ENCODE measurements at regions of chr1 and their contacts with region 1.

Region 1: GRCh38 chr1:19918057-19918456 is 5.4 kb downstream of the PLA2G2E start:
- DNase-seq: peak; percentile 85
- ATAC-seq: peak; percentile 75 to 86

Region 2: GRCh38 chr1:20151906-20152598 is 234.0 kb after region 1 on chr1:
- intact Hi-C with region 1: loop called (anchors 2 kb)
- DNase-seq: peak; percentile 90
- ATAC-seq: peak; percentile 91 to 93

Region 3: DNA sequence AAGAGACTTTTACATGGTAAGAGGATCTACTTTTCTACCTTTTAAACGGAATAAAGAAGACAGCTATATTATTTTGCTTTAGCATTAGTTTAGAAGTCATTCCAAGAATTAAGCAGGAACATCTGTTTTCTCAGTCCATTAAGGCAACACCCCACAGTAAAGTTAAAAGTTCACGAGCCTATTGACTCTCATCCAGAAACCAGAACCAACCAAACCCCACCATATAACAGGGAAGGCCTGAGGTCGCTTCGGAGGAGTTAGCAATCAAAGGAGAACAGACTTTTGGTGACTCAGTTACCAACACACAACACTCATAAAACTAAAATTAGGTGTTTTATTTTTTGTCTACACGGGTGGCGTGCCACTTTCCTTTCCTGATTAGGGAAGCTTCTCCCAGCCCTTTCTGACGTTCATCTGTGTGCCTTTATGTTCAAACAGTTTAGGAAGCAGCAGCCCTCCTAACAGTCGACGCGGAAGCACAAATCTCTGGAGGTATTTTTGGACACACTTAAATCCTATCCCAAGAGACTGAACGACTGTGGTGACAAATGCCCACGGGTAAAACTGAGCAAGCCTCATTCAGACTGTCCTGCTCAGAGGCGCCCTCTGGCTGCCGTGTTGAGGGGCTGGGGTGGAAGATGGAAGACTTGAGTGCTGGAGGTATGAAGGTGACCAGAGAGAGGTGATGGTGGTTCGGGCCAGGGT is 276.9 kb after region 1 on chr1:
- intact Hi-C with region 1: loop called in 1 of 2 experiments (anchors 2 kb)
- DNase-seq: peak; percentile 76
- ATAC-seq: peak; percentile 73 to 83

Region 4: GRCh38 chr1:20329793-20330542 is 411.9 kb after region 1 on chr1:
- intact Hi-C with region 1: no loop called
- DNase-seq: no peak
- ATAC-seq: no peak

Region 5: GRCh38 chr1:20485527-20486456 is 567.7 kb after region 1 on chr1 and contains the start of gene CAMK2N1:
- intact Hi-C with region 1: loop called (anchors 5 to 10 kb)
- DNase-seq: peak; percentile 80
- ATAC-seq: peak; percentile 87 to 89
- total RNA-seq, gene CAMK2N1: 19.4 to 25.3 TPM

Region 6: GRCh38 chr1:20493839-20494608 is 576.0 kb after region 1 on chr1:
- intact Hi-C with region 1: loop called (anchors 5 to 10 kb)
- DNase-seq: peak; percentile 78
- ATAC-seq: peak; percentile 88

Measured in left cardiac atrium (tissue), 4 donors.